ENCODE measurements at regions of chr12 and their contacts with region 1.

Region 1: DNA sequence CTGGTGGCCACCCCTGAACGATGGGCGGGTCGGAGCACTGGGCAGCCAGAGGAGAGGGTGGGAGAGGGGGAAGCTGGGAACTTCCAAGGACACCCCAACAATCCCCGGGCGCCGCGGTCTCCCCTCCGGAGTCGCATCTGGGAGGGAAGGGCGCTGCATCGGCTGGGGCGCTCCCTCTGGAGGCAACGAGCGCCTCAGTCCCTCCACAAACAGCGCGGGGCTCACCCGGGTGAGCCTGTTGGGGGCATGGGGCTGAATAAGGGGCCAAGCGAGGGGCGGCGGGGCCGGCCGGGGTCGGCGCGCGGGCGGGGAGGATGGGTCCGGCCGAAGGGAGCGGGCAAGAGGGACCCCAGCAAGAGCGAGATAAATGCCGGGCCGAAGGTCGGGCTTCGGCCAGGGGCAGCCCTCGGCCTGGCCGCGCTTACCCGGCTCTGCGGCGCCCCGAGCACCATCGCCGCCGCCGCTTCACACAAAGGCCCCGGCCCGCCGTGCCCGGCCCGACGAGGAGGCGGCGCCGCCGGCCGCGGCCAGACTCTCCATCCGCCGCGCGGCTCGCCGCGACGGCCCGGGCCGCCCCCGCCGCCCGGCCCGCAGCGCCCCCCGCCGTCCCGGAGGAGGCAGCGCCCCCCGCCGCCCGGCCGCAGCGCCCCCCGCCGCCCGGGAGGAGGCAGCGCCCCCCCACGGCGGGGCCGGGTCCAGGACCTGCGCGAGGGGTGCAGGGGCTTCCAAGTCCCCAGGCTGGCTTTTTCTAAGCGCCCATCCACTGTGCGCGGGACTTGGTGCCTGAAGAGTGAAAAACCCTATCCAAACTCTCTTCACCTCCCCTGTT is at the start of gene ZBTB39:
- DNase-seq: peak; percentile 63
- ATAC-seq: peak; percentile 67
- H3K4me3 Mint-ChIP-seq: peak within 1 kb of the TSS; percentile 93
- H3K27ac Mint-ChIP-seq: no peak within 1 kb of the TSS
- H3K4me1 Mint-ChIP-seq: peaks cover 44% of the 10 kb centered on the region
- H3K27me3 Mint-ChIP-seq: no peaks in the 10 kb centered on the region
- CTCF ChIP-seq: no peak
- total RNA-seq, gene ZBTB39: 20.2 to 23.0 TPM (median 22.5 TPM) in 3 replicates

Region 2: GRCh38 chr12:56759263-56759908 is 246.8 kb before region 1 on chr12:
- CTCF ChIA-PET with region 1: interaction called, 34 read pairs
- POLR2A ChIA-PET with region 1: interaction called, 5 read pairs
- DNase-seq: no peak
- ATAC-seq: no peak
- H3K4me3 Mint-ChIP-seq: no peak overlapping the region
- H3K27ac Mint-ChIP-seq: no peak overlapping the region
- H3K4me1 Mint-ChIP-seq: peaks cover 4% of the 10 kb centered on the region
- H3K27me3 Mint-ChIP-seq: peaks cover 5% of the 10 kb centered on the region
- CTCF ChIP-seq: no peak

Region 3: GRCh38 chr12:56839915-56840325 is 166.3 kb before region 1 on chr12:
- CTCF ChIA-PET with region 1: interaction called, 43 read pairs
- POLR2A ChIA-PET with region 1: no interaction called
- DNase-seq: peak; percentile 78
- ATAC-seq: peak; percentile 91
- H3K4me3 Mint-ChIP-seq: no peak overlapping the region
- H3K27ac Mint-ChIP-seq: no peak overlapping the region
- H3K4me1 Mint-ChIP-seq: no peaks in the 10 kb centered on the region
- H3K27me3 Mint-ChIP-seq: peaks cover 12% of the 10 kb centered on the region
- CTCF ChIP-seq: peak; percentile 22; the same call in 1 of the 2 replicates

Region 4: GRCh38 chr12:56878010-56878339 is 128.2 kb before region 1 on chr12:
- CTCF ChIA-PET with region 1: no interaction called
- POLR2A ChIA-PET with region 1: no interaction called
- DNase-seq: no peak
- ATAC-seq: no peak
- H3K4me3 Mint-ChIP-seq: no peak overlapping the region
- H3K27ac Mint-ChIP-seq: no peak overlapping the region
- H3K4me1 Mint-ChIP-seq: peaks cover 7% of the 10 kb centered on the region
- H3K27me3 Mint-ChIP-seq: peaks cover 24% of the 10 kb centered on the region
- CTCF ChIP-seq: no peak

Region 5: GRCh38 chr12:56987551-56988053 is 18.6 kb before region 1 on chr12:
- CTCF ChIA-PET with region 1: interaction called, 52 read pairs
- POLR2A ChIA-PET with region 1: no interaction called
- DNase-seq: peak; percentile 90
- ATAC-seq: peak; percentile 96
- H3K4me3 Mint-ChIP-seq: no peak overlapping the region
- H3K27ac Mint-ChIP-seq: no peak overlapping the region
- H3K4me1 Mint-ChIP-seq: peaks cover 17% of the 10 kb centered on the region
- H3K27me3 Mint-ChIP-seq: no peaks in the 10 kb centered on the region; the same call in 1 of the 2 replicates
- CTCF ChIP-seq: peak; percentile 96

Region 6: DNA sequence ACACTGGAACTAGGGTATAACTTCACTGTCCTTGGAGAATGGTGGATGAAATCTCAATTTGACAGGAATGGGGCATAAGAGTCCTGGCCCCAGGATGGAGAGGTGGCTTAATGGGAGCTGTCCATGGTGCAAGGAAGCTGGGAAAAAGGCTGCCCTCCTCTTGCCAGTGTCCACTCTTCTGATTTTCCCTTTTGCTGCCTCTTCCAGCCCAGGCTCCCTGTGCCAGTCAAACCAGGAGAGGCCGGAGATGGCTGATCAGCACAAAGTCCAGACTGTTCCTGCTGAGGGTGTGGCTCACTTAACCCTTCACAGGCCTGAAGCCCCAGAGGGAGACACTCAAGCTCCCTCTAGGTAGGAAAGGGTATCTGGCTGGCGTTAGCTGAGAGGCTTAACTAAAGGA is 43.7 kb after region 1 on chr12 and contains the start of gene MYO1A:
- CTCF ChIA-PET with region 1: interaction called, 10 read pairs
- POLR2A ChIA-PET with region 1: no interaction called
- DNase-seq: no peak
- ATAC-seq: peak; percentile 60
- H3K4me3 Mint-ChIP-seq: no peak within 1 kb of the TSS
- H3K27ac Mint-ChIP-seq: no peak within 1 kb of the TSS
- H3K4me1 Mint-ChIP-seq: no peaks in the 10 kb centered on the region
- H3K27me3 Mint-ChIP-seq: no peaks in the 10 kb centered on the region
- CTCF ChIP-seq: no peak
- total RNA-seq, gene MYO1A: 0.32 to 0.87 TPM (median 0.71 TPM) in 3 replicates

Region 7: GRCh38 chr12:57069523-57069922 is 63.3 kb after region 1 on chr12:
- CTCF ChIA-PET with region 1: interaction called, 13 read pairs
- POLR2A ChIA-PET with region 1: interaction called, 4 read pairs
- DNase-seq: peak; percentile 50
- ATAC-seq: peak; percentile 99
- H3K4me3 Mint-ChIP-seq: no peak overlapping the region
- H3K27ac Mint-ChIP-seq: peak overlapping the region; percentile 34
- H3K4me1 Mint-ChIP-seq: no peaks in the 10 kb centered on the region
- H3K27me3 Mint-ChIP-seq: no peaks in the 10 kb centered on the region
- CTCF ChIP-seq: peak; percentile 64